CD14-positive monocyte (primary cell): ENCODE measurements at regions of chr10 and their contacts with region 1.

Region 1: GRCh38 chr10:61943674-61944410 is 42.3 kb downstream of the ARID5B start:
- DNase-seq: peak in 1 of 3 donors; percentile 40
- H3K4me3 ChIP-seq: peak overlapping the region in 1 of 3 experiments; percentile 27
- H3K4me3 Mint-ChIP-seq: no peak overlapping the region
- H3K27ac ChIP-seq: peak overlapping the region in 1 of 2 donors; percentile 90
- H3K27ac Mint-ChIP-seq: peak overlapping the region in 6 of 7 donors; percentile 8 to 98 (median 91)
- H3K4me1 ChIP-seq: peaks cover 36 to 61% of the 10 kb centered on the region in 2 donors
- H3K4me1 Mint-ChIP-seq: peaks cover 49% of the 10 kb centered on the region
- H3K27me3 ChIP-seq: no peaks in the 10 kb centered on the region
- H3K27me3 Mint-ChIP-seq: no peaks in the 10 kb centered on the region
- CTCF ChIP-seq: no peak

Region 2: DNA sequence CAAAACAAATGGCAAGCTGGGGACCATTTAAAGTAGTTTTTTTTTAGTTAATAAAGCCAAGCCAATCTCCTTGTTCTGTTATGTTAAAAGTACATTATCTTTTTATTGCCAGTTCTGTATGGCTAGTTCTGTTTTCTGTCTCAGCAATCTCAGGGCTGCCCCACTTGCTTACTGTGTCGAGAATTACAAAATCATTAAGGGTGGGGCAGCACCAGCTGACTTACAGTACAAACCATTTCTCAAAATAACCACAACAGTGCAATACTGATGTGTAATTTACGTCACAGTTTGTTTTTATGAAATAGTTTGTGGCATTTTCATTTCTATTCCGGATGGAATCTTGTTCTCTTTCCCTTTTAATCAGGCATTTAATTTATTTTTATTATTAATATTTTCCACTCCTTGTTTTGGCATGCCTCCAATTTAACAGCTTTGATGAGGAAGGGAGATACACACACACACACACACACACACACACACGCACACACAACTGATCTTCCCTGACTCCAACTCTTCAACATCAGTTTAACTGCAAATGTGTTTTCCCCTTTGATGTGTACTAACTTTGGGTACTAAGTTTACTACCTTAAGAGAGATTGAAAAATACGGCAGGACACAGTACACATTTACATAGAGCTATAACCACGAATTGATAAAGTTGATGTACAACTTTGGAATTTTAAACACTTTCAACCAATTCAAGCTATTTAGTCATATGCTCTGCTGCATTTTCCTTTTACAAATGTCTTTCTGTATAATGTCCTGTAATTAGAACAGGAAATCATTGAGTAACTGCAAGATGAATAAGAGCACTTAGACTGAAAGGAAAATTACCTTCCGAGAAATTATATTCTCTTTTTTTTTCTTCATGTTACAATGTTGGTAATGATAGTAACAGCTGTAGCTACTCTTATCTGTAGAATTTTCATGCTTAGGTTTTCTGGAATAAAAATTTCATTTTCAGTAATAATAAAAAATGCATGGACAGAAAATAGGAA is 49.1 kb after region 1 on chr10:
- intact Hi-C with region 1: loop called in 1 of 2 experiments (anchors 10 kb)
- DNase-seq: peak; percentile 91 to 96 (median 96)
- H3K4me3 ChIP-seq: peak overlapping the region; percentile 34 to 75 (median 61)
- H3K4me3 Mint-ChIP-seq: peak overlapping the region; percentile 14 to 77
- H3K27ac ChIP-seq: peak overlapping the region; percentile 69 to 98
- H3K27ac Mint-ChIP-seq: peak overlapping the region; percentile 92 to 100 (median 99)
- H3K4me1 ChIP-seq: peaks cover 26 to 40% of the 10 kb centered on the region in 2 donors
- H3K4me1 Mint-ChIP-seq: peaks cover 42% of the 10 kb centered on the region
- H3K27me3 ChIP-seq: no peaks in the 10 kb centered on the region
- H3K27me3 Mint-ChIP-seq: peaks cover 0 to 7% (median 0%) of the 10 kb centered on the region in 3 donors
- CTCF ChIP-seq: no peak

Region 3: DNA sequence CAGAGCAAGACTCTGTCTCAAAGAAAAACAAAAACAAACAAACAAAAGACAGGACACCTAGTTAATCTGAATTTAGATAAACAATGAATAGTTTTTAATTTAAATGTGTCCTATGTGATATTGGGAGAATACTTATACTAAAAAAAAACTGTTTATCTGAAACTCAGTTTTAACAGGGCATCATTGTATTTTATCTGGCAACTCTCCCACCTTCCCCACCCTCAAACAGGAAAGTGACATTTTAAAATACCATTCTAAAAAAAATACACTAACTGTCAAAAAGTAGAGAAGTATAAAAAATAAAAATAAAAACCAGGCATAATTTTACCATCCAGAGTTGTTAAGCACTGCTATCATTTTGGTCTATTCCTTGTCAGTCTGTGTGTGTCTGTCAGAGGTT is 205.8 kb after region 1 on chr10:
- intact Hi-C with region 1: no loop called
- DNase-seq: no peak
- H3K4me3 ChIP-seq: no peak overlapping the region
- H3K4me3 Mint-ChIP-seq: no peak overlapping the region
- H3K27ac ChIP-seq: no peak overlapping the region
- H3K27ac Mint-ChIP-seq: no peak overlapping the region
- H3K4me1 ChIP-seq: peaks cover 10 to 12% of the 10 kb centered on the region in 2 donors
- H3K4me1 Mint-ChIP-seq: peaks cover 9% of the 10 kb centered on the region
- H3K27me3 ChIP-seq: no peaks in the 10 kb centered on the region
- H3K27me3 Mint-ChIP-seq: peaks cover 0 to 2% (median 0%) of the 10 kb centered on the region in 3 donors
- CTCF ChIP-seq: no peak